ENCODE measurements at regions of chr10 and their contacts with region 1.

Region 1: GRCh38 chr10:73879296-73880173 is 5.2 kb upstream of the CAMK2G start:
- DNase-seq: peak; percentile 100
- ATAC-seq: peak; percentile 76
- H3K4me3 ChIP-seq: peak overlapping the region; percentile 8; the same call in 1 of the 2 replicates
- H3K27ac ChIP-seq: no peak overlapping the region
- H3K4me1 ChIP-seq: peaks cover 51% of the 10 kb centered on the region
- H3K27me3 ChIP-seq: no peaks in the 10 kb centered on the region
- CTCF ChIP-seq: peak; percentile 100

Region 2: GRCh38 chr10:73772280-73773151 is 107.0 kb before region 1 on chr10:
- CTCF ChIA-PET with region 1: interaction called, 39 read pairs
- POLR2A ChIA-PET with region 1: interaction called, 6 read pairs
- intact Hi-C with region 1: loop called (anchors 1 kb)
- DNase-seq: peak; percentile 99
- ATAC-seq: peak; percentile 66
- H3K4me3 ChIP-seq: peak overlapping the region; percentile 73
- H3K27ac ChIP-seq: peak overlapping the region; percentile 71
- H3K4me1 ChIP-seq: peaks cover 26% of the 10 kb centered on the region
- H3K27me3 ChIP-seq: no peaks in the 10 kb centered on the region
- CTCF ChIP-seq: peak; percentile 53

Region 3: DNA sequence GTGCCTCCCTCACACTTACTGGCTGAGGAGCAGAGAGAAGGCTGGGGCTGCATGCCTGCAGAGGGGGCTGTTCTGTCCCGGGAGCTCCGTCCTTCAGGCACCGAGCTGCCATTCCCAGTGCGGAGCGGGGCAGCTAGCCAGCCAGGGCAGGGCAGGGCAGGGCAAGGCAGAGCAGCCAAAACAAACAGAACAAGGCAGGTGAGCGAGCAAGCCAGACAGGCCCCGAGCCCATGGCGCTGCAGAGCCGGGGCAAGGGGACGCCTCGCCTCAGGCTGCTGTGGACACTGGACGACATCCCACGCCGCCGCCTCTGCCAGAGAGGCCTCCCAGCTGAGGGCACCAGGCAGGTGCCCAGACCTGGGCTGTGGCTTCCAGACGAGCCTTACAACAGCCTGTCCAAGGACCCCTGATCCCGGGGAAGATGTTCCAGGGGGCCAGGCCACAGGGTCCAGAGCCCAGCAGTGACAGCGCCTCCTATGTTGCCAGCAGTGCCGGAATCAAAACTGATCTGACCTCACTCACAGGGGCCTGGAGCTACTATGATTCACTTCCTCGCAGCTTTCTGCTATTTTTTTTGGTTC is 59.9 kb before region 1 on chr10:
- CTCF ChIA-PET with region 1: interaction called, 32 read pairs
- POLR2A ChIA-PET with region 1: no interaction called
- intact Hi-C with region 1: loop called (anchors 2 kb)
- DNase-seq: peak; percentile 97
- ATAC-seq: peak; percentile 94
- H3K4me3 ChIP-seq: peak overlapping the region; percentile 33
- H3K27ac ChIP-seq: peak overlapping the region; percentile 66
- H3K4me1 ChIP-seq: peaks cover 22% of the 10 kb centered on the region
- H3K27me3 ChIP-seq: no peaks in the 10 kb centered on the region
- CTCF ChIP-seq: peak; percentile 89

Region 4: GRCh38 chr10:73837072-73837471 is 42.5 kb before region 1 on chr10:
- CTCF ChIA-PET with region 1: interaction called, 3 read pairs
- POLR2A ChIA-PET with region 1: interaction called, 12 read pairs
- intact Hi-C with region 1: loop called (anchors 5 kb)
- DNase-seq: peak; percentile 74
- ATAC-seq: peak; percentile 85
- H3K4me3 ChIP-seq: no peak overlapping the region
- H3K27ac ChIP-seq: peak overlapping the region; percentile 25
- H3K4me1 ChIP-seq: peaks cover 22% of the 10 kb centered on the region
- H3K27me3 ChIP-seq: no peaks in the 10 kb centered on the region
- CTCF ChIP-seq: no peak

Region 5: DNA sequence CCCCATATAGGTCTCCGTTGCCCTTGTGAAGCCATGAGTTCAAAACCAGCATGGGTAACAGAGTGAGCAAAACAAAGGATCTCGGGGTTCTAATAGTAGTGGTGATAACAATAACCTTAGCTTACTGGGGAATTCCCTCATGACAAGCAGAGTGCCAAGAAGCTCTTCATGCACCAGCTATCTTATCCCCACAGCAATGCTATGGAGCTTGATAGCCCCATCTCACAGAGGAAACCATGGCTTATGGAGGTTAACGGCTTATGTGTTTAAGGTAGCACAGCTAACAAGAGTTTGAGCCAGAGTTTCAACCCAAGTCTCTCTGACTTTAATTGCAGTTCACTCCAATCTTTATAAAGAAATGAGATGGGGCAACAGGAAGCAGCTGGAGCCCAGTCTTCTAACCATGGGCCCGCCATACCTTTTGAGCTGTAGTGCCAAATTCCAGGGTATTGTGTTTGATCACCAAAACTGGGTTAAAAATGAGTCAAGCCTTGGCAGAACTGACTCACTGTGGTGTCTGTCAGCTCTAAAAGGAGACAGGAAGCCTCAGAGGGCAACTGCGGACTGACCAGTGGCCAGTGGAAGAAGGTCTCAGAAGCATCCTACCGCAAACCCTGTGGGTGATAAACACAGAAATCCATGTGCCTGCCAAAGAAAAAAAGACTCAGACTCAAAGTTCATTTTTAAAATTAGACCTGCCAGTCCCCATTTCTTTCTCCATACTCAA is 14.9 kb after region 1 on chr10:
- CTCF ChIA-PET with region 1: interaction called, 13 read pairs
- POLR2A ChIA-PET with region 1: no interaction called
- intact Hi-C with region 1: no loop called
- DNase-seq: peak; percentile 100
- ATAC-seq: peak; percentile 67
- H3K4me3 ChIP-seq: no peak overlapping the region
- H3K27ac ChIP-seq: peak overlapping the region; percentile 60
- H3K4me1 ChIP-seq: peaks cover 76% of the 10 kb centered on the region
- H3K27me3 ChIP-seq: no peaks in the 10 kb centered on the region
- CTCF ChIP-seq: no peak

Region 6: DNA sequence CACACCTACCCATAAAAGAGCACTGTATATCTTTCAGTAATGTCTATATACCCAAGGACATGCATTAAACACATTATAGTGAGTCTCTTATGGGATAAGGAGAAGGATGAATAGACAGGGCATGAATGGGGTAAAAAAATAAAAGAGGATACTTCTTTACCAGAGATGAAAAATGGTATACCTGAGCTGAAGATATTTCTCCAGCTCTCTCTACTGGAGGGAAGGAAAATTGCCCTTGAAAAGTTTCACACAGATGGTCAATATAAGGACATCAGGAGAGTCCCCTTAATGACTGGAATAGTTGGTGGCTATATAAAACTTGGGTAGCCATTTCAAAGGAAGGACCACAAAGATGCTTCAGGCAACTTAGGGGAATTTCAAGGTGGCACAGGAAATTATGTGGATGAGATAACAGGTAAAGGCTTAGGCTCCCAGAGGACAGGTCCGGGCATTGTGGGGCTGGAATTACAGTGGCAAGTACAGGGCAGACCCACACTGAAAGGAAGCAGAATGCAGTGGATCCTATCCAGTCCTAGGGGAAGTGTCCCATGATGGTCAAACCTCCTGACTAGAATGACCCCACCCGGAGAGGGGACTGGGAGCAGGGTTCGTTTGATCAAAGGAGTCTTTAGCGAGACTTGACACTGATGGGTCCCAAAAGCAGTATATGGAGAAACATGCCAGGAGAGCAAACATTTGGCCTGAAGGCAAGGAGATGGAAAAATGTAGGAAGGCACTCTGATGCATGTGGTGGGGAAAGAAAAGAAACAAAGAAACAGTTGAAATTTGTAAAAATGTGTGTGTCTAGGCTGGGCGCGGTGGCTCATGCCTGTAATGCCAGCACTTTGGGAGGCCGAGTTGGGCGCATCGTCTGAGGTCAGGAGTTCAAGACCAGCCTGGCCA is 67.0 kb after region 1 on chr10:
- CTCF ChIA-PET with region 1: interaction called, 26 read pairs
- POLR2A ChIA-PET with region 1: interaction called, 26 read pairs
- intact Hi-C with region 1: no loop called
- DNase-seq: peak; percentile 69
- ATAC-seq: peak; percentile 17
- H3K4me3 ChIP-seq: no peak overlapping the region
- H3K27ac ChIP-seq: no peak overlapping the region
- H3K4me1 ChIP-seq: peaks cover 8% of the 10 kb centered on the region
- H3K27me3 ChIP-seq: no peaks in the 10 kb centered on the region
- CTCF ChIP-seq: peak; percentile 83

Region 7: GRCh38 chr10:74103560-74104248 is 224.2 kb after region 1 on chr10:
- CTCF ChIA-PET with region 1: interaction called, 8 read pairs
- POLR2A ChIA-PET with region 1: interaction called, 10 read pairs
- intact Hi-C with region 1: no loop called
- DNase-seq: peak; percentile 90
- ATAC-seq: peak; percentile 87
- H3K4me3 ChIP-seq: no peak overlapping the region
- H3K27ac ChIP-seq: no peak overlapping the region
- H3K4me1 ChIP-seq: no peaks in the 10 kb centered on the region
- H3K27me3 ChIP-seq: no peaks in the 10 kb centered on the region
- CTCF ChIP-seq: peak; percentile 100